ENCODE measurements at regions of chr5 and their contacts with region 1.

Region 1: DNA sequence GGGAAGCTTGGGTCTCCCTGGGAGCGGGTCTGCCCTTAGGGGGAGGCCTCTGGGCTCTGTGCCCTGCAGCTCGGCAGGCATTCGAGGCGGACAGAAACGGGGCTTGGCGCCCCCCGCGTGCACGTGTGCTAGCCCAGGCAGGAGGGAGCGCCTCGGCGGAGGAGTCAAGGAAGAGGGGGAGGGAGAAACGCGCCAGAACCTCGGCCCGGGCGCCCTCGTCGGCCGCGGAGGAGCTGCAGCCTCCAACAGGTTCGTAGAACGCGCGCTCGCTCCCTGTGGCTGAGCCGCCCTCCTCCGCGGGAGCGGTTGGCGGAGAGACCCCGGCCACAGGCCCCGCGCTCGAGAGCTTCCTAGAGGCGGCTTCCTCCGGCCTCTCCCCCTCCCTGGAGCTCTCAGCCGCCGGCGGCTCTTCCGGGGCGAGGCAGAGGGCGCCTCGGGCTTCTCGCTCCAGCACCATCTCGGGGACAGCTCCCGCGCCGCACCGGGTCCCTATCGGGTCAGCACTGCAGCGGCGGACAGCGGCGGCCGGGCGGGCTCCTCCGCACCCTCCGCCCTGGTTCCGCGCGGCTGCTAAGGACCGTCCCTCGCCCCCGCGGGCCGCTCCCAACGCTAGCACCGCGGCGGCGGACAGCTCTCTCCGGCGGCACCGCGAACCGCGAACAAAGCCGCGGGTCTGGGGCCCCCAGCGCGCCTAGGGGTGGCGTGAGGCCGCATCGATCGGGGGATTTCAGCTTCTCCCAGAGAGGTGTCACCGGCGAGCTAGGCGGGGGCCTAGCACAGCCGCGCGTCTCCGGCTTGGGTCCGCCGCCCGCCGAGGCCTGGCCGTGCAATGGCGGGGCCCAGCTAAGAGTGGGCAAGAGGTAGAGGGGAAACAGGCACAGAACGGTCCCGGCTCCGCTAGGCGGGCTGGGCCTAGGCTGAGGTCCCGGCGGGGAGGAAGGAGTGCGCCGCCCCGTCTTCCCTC is 74.6 kb upstream of the CPLX2 start:
- DNase-seq: peak; percentile 67 to 90 (median 76)
- ATAC-seq: peak; percentile 99
- H3K4me3 ChIP-seq: no peak overlapping the region
- H3K4me3 Mint-ChIP-seq: no peak overlapping the region
- H3K27ac ChIP-seq: no peak overlapping the region
- H3K27ac Mint-ChIP-seq: no peak overlapping the region
- H3K4me1 ChIP-seq: peaks cover 20% of the 10 kb centered on the region
- H3K4me1 Mint-ChIP-seq: peaks cover 7% of the 10 kb centered on the region
- H3K27me3 ChIP-seq: peaks cover 57 to 69% of the 10 kb centered on the region in 2 experiments
- H3K27me3 Mint-ChIP-seq: peaks cover 81% of the 10 kb centered on the region
- CTCF ChIP-seq: no peak

Region 2: DNA sequence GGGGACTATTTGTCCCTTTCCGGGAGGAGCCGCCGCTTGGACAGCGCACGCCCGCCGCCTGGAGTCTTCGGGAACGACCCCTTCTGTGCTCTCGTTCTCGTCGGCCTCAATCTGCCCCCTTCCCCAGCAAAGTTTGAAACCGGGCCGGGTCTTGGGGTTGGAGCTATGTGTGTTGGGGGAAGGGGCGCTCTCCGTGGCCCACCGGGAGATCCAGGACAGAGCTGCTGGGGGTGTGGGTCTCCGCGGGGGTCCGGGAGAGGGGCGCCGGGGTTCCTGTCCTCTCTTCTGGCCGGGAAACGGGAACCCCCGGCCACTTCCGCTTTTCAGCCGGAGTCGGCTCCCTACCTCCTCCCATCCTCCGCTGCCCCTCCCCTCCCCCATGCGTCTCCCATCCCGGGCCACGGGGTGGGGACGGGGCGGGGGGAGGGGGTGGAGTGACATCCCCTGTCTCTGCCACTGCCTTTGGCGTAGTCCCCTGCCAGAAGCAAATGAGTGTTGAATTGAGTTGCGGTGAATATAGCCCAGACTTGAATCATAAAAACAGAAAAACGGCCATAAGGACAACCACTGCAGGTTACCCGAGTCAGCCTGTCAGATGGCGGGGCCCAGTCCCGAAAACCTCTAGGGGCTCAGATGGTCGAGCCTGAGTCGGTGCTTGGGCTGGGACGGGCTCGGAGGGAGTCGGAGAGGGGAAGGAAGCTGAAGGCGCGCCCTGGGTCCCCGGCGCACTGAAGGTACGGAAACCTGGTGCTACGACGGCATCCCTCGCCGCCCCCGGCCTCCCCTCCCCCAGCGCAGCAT is 75.7 kb after region 1 on chr5:
- CTCF ChIA-PET with region 1: no interaction called
- POLR2A ChIA-PET with region 1: no interaction called
- intact Hi-C with region 1: loop called in 1 of 2 experiments (anchors 1 kb)
- DNase-seq: no peak
- ATAC-seq: no peak
- H3K4me3 ChIP-seq: no peak overlapping the region
- H3K4me3 Mint-ChIP-seq: no peak overlapping the region
- H3K27ac ChIP-seq: no peak overlapping the region
- H3K27ac Mint-ChIP-seq: no peak overlapping the region
- H3K4me1 ChIP-seq: peaks cover 18% of the 10 kb centered on the region
- H3K4me1 Mint-ChIP-seq: peaks cover 5% of the 10 kb centered on the region
- H3K27me3 ChIP-seq: peaks cover 35 to 48% of the 10 kb centered on the region in 2 experiments
- H3K27me3 Mint-ChIP-seq: peaks cover 81% of the 10 kb centered on the region
- CTCF ChIP-seq: no peak

Region 3: DNA sequence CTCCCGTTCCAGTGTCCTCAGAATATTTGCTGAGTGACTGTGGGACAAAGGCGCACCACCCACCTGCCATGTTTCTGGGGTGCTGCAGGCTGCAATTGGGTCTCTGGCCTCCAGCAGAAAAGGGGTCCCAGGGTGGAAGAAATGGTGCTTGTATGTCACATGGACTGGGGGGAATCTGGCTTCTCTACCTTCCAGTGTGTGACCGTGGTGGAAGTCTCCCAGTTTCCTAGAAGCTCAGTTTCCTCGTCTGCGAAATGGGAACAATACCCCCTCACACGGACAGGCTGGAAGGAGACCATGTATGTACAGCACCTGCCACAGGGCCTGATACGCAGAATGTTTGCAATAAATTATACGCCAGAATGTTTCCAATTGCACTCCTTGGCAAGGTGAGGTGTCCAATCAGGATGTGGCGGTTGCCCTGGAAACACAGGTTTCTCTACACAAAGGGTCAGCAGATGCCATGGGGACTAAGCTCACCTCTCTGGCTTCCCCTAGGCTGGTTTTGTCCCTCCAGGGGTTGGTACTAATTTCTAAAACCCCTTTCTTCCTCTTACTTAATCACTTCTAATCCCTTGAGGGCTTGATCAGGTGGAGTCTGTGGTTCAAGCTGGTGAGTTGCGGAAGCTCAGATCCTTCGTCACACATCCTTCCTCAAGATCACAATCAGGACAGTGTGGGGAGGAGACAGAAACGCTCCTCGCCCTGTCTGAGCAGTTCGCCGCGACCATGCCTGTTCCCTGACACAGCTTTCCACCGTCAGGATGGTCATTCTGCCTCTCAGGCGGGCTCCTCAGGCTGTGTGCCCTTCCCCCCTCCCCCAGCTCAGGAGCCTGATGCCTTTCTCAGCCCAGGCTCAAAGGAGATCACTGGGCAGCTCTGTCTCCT is 98.6 kb after region 1 on chr5:
- CTCF ChIA-PET with region 1: no interaction called
- POLR2A ChIA-PET with region 1: no interaction called
- intact Hi-C with region 1: loop called in 1 of 2 experiments (anchors 10 kb)
- DNase-seq: peak in 13 of 14 experiments; percentile 13 to 82 (median 32)
- ATAC-seq: peak; percentile 97
- H3K4me3 ChIP-seq: peak overlapping the region; percentile 38
- H3K4me3 Mint-ChIP-seq: peak overlapping the region; percentile 36
- H3K27ac ChIP-seq: no peak overlapping the region
- H3K27ac Mint-ChIP-seq: peak overlapping the region; percentile 10
- H3K4me1 ChIP-seq: peaks cover 27% of the 10 kb centered on the region
- H3K4me1 Mint-ChIP-seq: peaks cover 32% of the 10 kb centered on the region
- H3K27me3 ChIP-seq: no peaks in the 10 kb centered on the region
- H3K27me3 Mint-ChIP-seq: no peaks in the 10 kb centered on the region
- CTCF ChIP-seq: no peak

Measured in CD4-positive, alpha-beta T cell (primary cell).